Heart left ventricle (tissue), 16 donors: ENCODE measurements at regions of chr5 and their contacts with region 1.

Region 1: DNA sequence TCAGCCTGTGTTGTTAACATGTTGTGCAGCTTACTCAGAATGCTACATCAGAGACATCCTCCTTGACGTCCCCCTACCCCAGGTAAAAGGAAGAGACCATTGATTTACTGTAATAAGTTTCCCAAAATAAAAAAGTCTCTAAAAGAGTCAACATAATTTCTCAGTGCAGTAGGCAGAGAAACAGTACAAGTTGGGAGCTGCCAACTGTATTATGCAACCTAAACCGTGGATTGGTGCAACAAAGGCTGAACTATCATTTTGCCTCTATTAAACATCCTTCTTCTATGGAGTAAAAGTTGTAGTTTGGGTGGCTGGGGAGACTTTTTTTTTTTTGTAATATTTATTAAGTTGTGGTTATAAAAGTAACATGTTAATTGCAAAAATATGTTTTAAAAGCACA is 208.0 kb downstream of the NR3C1 start:
- DNase-seq: no peak
- ATAC-seq: peak in 2 of 4 donors; percentile 45 to 55
- H3K4me3 ChIP-seq: no peak overlapping the region
- H3K27ac ChIP-seq: no peak overlapping the region
- H3K4me1 ChIP-seq: peaks cover 0 to 40% (median 18%) of the 10 kb centered on the region in 12 donors
- H3K27me3 ChIP-seq: no peaks in the 10 kb centered on the region
- CTCF ChIP-seq: no peak
- POLR2A ChIP-seq: no peak

Region 2: DNA sequence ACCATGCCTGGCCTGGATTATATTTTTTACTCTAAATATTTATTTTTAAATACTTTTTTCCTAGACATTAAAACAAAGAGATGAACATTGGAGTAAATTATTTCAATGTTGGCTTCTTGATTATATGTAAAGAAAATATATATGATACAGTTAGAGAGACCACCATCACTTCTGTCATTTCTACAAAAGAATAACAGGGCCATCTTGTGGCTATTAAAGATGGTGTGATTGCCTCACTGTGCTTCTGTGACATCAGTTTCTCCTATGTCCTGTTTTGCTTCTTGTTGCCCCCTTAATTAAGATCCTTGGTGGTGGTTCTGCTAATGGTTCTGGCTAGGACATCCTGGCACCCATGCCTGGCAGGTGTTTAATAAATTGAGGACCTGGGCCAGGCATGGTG is 1054.0 kb before region 1 on chr5:
- intact Hi-C with region 1: no loop called
- DNase-seq: no peak
- ATAC-seq: no peak
- H3K4me3 ChIP-seq: no peak overlapping the region
- H3K27ac ChIP-seq: no peak overlapping the region
- H3K4me1 ChIP-seq: peaks cover 0 to 5% (median 0%) of the 10 kb centered on the region in 12 donors
- H3K27me3 ChIP-seq: no peaks in the 10 kb centered on the region
- CTCF ChIP-seq: peak in 1 of 12 donors; percentile 13
- POLR2A ChIP-seq: no peak

Region 3: DNA sequence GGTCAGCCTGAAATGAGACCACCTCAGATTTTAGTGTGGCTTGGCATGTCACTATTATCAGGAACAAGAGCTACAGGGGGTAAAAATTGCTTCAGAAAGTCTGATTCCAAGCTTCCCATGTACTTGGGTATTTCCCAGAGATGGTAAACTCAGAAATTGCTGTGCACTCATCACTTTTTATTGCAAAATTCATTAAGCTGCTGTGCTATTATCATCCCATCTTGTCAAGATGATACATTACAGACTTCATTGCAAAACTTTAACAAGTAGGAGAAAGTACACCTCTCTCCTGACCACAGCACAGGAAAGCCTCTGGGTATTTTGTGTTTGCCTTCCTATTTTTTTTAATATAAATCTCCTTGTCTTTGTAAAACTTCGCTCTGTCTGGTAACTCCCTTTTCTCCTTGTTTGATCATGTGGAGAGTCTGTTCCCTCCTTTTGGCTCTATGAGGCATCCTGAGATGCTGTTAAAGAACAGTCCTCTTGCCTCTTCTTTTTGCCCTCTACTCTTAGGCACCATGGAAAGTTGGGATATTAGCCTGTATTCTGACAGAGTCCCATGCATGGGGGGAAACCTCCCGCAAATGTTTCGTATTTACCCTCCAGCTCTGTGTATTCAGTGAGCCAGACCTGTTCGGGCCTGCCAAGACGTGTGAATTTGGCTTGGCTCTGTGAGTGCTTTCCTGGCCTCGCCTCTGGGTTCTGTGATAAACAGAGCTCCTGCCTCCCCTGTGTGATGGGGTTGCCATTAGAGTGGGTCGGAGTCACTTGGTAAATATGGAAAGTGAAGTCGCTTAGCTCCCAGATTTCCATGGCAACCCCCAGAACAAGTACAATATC is 52.7 kb before region 1 on chr5:
- intact Hi-C with region 1: loop called in 1 of 10 experiments (anchors 10 kb)
- DNase-seq: peak in 4 of 5 donors; percentile 65 to 80 (median 73)
- ATAC-seq: peak; percentile 70 to 93 (median 88)
- H3K4me3 ChIP-seq: no peak overlapping the region
- H3K27ac ChIP-seq: peak overlapping the region in 10 of 12 donors; percentile 23 to 74 (median 52)
- H3K4me1 ChIP-seq: peaks cover 2 to 76% (median 39%) of the 10 kb centered on the region in 12 donors
- H3K27me3 ChIP-seq: no peaks in the 10 kb centered on the region
- CTCF ChIP-seq: no peak
- POLR2A ChIP-seq: no peak

Region 4: GRCh38 chr5:143229896-143230675 is 34.6 kb after region 1 on chr5:
- intact Hi-C with region 1: no loop called
- DNase-seq: peak in 1 of 5 donors; percentile 39
- ATAC-seq: peak; percentile 44 to 78 (median 68)
- H3K4me3 ChIP-seq: no peak overlapping the region
- H3K27ac ChIP-seq: no peak overlapping the region
- H3K4me1 ChIP-seq: peaks cover 0 to 25% (median 11%) of the 10 kb centered on the region in 12 donors
- H3K27me3 ChIP-seq: no peaks in the 10 kb centered on the region
- CTCF ChIP-seq: no peak
- POLR2A ChIP-seq: no peak